Astrocyte of the cerebellum (primary cell): ENCODE measurements at regions of chr17 and their contacts with region 1.

Region 1: DNA sequence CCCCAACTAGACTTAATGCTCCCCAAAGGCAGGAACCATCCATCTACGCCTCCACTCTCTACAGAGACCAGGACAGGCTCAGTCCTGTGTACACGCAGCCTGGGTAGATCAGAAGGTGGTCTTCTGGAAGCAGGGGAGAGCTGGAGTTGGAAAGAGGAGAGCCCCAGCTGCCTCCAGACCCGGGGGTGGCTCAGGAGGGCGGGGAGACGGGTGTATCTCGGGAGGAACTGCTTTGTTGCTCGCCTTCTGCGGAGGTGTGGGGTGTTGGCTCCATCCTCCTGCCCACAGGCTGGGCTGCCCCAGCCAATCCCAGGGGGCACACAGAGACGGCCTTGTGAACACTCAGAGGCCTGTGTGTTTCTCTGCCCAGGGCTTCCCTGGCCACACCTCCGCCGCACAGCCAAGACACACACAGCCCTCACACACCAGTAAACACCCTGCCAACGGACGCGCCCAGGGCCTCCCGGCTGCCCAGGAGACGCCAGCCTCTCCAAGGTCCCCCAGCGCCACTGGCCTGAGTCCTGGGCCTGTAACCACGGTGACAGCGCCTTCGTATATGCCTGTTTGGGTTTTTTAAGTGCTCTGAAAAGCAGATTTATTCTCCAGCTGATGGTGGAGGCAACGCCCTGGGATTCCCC is 143.4 kb upstream of the CDC42EP4 start:
- DNase-seq: no peak
- H3K4me3 ChIP-seq: no peak overlapping the region
- CTCF ChIP-seq: no peak

Region 2: GRCh38 chr17:73710095-73710592 is 255.0 kb after region 1 on chr17:
- in situ Hi-C with region 1: loop called (anchors 10 kb)
- DNase-seq: peak; percentile 13
- H3K4me3 ChIP-seq: no peak overlapping the region
- CTCF ChIP-seq: peak; percentile 81